Panc1 (cell line): ENCODE measurements at regions of chr10 and their contacts with region 1.

Region 1: DNA sequence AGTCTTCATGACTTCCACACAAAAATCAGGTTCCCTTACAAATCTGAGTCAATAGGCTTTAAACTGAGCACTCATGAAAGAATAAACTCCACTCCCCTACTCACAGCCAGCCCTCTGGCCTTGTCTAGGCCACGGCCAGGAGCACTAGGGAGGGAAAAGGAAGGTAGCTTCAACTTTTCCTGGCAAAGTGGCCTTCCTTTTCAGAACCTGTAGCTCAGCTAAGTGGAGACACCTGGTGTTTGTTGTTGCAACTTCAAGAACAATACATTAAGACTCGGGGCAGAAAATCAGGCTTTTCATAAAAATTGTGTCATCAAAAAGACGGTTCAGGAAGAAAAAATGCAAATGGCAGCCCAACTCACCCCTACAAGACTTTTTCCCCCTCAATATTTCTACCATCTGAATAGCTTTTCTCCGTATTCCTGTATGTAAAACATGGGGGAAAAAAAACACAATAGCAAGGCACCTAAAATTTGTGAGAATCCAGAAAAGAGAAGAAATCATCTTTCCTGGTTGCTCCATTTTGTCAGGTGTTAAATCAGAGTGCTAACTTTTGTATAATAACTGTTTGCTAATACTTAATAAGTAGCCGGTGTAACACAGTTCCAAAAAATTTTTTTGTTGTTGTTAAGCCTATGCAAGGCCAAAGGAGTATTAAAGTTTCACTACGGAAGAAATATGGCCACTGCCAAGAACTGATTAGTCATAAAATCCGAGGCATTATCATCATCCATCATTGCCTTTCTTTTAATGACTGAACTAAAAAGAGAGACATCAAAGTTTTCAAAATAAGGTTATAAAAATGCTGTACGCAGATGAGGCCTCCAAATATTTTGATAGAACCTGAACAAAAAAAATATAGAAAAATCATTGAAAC is 66.2 kb upstream of the ARID5B start:
- DNase-seq: no peak
- ATAC-seq: 0 out of 2 replicates have a peak, but pooled peaks have one; percentile 12
- H3K4me3 ChIP-seq: no peak overlapping the region
- H3K27ac ChIP-seq: peak overlapping the region; percentile 99
- H3K4me1 ChIP-seq: peaks cover 38% of the 10 kb centered on the region
- H3K27me3 ChIP-seq: no peaks in the 10 kb centered on the region
- CTCF ChIP-seq: peak; percentile 80

Region 2: GRCh38 chr10:61140765-61141392 is 694.4 kb before region 1 on chr10:
- CTCF ChIA-PET with region 1: no interaction called
- POLR2A ChIA-PET with region 1: no interaction called
- in situ Hi-C with region 1: no loop called
- intact Hi-C with region 1: loop called (anchors 5 kb)
- DNase-seq: peak; percentile 67
- ATAC-seq: peak; percentile 88
- H3K4me3 ChIP-seq: no peak overlapping the region
- H3K27ac ChIP-seq: peak overlapping the region; percentile 60; the same call in 1 of the 2 replicates
- H3K4me1 ChIP-seq: peaks cover 6% of the 10 kb centered on the region
- H3K27me3 ChIP-seq: no peaks in the 10 kb centered on the region
- CTCF ChIP-seq: peak; percentile 77

Region 3: DNA sequence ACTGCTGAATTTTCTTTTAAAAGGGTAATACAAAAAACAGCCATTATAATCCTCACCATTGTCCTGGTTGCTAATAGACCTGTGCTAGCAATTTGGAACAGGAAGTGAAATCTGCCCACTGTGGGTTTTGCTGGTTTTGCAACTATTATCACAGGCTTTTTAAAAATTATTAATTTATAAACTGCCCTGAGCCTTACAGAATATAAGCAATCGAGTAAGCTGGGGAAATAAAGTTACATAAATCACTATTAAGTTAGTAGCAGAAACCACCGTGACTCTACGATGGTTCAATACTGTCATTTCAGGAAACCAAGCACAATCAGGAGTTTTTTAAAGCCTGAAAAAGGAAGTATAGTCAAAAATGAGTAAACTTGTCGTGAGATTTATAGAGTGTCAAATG is 444.5 kb before region 1 on chr10:
- CTCF ChIA-PET with region 1: no interaction called
- POLR2A ChIA-PET with region 1: no interaction called
- in situ Hi-C with region 1: no loop called
- intact Hi-C with region 1: no loop called
- DNase-seq: no peak
- ATAC-seq: no peak
- H3K4me3 ChIP-seq: no peak overlapping the region
- H3K27ac ChIP-seq: no peak overlapping the region
- H3K4me1 ChIP-seq: no peaks in the 10 kb centered on the region
- H3K27me3 ChIP-seq: no peaks in the 10 kb centered on the region
- CTCF ChIP-seq: no peak

Region 4: GRCh38 chr10:61662794-61663259 is 172.5 kb before region 1 on chr10 and contains the start of gene CABCOCO1:
- CTCF ChIA-PET with region 1: no interaction called
- POLR2A ChIA-PET with region 1: no interaction called
- in situ Hi-C with region 1: no loop called
- intact Hi-C with region 1: loop called (anchors 10 kb)
- DNase-seq: no peak
- ATAC-seq: peak; percentile 100
- H3K4me3 ChIP-seq: peak within 1 kb of the TSS; percentile 71 to 78
- H3K27ac ChIP-seq: peak within 1 kb of the TSS; percentile 89
- H3K4me1 ChIP-seq: peaks cover 16% of the 10 kb centered on the region
- H3K27me3 ChIP-seq: no peaks in the 10 kb centered on the region
- CTCF ChIP-seq: peak; percentile 65
- total RNA-seq, gene CABCOCO1: 4.0 TPM

Region 5: DNA sequence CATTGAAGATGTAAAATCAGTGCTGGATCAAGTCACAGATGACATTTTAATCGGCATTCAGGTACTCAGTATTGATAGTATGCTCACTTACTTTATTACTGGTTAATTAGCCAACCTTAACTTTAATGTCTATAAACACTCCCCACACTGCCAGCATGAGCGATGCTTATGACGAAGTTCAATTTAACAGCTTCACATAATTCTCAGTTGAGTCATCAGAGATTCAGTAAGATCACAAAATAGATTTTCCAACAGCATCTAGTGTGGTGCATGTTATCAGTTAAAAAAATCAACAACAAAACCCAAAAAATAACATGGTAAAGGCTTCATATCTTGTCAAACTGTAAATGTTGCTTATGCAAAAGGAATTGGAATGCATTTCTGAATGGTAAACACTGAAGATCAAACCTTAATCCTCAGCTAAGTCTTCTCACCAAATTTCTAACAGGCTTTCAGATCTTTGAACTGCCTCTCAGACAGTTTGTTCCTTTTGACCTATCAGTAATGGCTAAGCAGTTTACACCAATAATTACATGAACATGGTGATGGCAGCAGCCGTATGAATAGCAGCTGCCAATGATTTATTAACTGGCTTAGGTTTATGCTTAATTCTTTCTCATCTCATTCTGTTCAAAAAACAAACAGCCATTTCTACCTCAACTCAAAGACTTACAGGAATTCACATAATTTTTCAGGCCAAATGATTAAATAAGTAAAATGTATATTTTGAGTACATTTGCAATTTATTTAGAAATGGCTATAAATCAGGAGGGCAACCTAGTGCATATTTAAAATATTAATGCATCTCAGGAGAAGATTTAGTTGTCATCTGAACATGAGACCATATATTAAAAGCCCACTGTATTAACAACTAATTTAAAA is 74.1 kb before region 1 on chr10:
- CTCF ChIA-PET with region 1: no interaction called
- POLR2A ChIA-PET with region 1: no interaction called
- in situ Hi-C with region 1: no loop called
- intact Hi-C with region 1: loop called (anchors 5 kb)
- DNase-seq: no peak
- ATAC-seq: peak; percentile 95
- H3K4me3 ChIP-seq: no peak overlapping the region
- H3K27ac ChIP-seq: peak overlapping the region; percentile 94
- H3K4me1 ChIP-seq: peaks cover 33% of the 10 kb centered on the region
- H3K27me3 ChIP-seq: no peaks in the 10 kb centered on the region
- CTCF ChIP-seq: no peak

Region 6: DNA sequence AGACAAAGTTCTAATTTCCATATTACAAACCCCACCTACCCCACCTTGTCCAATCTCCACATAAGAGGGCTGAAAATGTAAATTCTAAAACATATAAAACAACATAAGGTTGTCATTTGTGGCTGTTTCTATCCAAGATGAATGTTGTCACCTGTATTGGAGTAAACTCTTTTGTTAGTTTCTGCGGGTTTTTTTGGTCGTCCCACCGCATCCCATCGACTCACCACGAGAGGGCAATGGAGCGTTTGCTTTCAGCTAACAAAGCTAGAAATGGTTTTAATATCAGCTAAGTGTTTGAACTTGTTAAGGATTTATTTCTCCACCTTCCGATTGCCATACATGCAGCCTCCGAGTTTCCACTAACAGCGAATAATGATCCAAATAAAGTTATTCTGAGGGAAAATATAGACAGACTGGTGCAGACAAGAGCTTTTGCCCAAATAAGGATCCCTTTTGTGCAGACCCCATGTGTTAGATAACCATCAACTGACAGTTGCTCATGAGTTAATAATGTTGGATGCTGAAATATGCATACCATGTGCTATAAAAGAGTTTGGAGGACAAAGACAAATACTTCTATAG is 203.4 kb after region 1 on chr10:
- CTCF ChIA-PET with region 1: interaction called, 14 read pairs
- POLR2A ChIA-PET with region 1: no interaction called
- in situ Hi-C with region 1: no loop called
- intact Hi-C with region 1: no loop called
- DNase-seq: peak; percentile 69
- ATAC-seq: peak; percentile 82
- H3K4me3 ChIP-seq: no peak overlapping the region
- H3K27ac ChIP-seq: peak overlapping the region; percentile 87
- H3K4me1 ChIP-seq: peaks cover 59% of the 10 kb centered on the region
- H3K27me3 ChIP-seq: no peaks in the 10 kb centered on the region
- CTCF ChIP-seq: peak; percentile 92